H1 (cell line): ENCODE measurements at regions of chr1 and their contacts with region 1.

Region 1: GRCh38 chr1:159798893-159799292 is 3.3 kb upstream of the FCRL6 start:
- DNase-seq: peak in 1 of 2 experiments; percentile 59
- H3K4me3 ChIP-seq: no peak overlapping the region
- H3K27ac ChIP-seq: no peak overlapping the region
- H3K4me1 ChIP-seq: no peaks in the 10 kb centered on the region
- H3K27me3 ChIP-seq: no peaks in the 10 kb centered on the region
- CTCF ChIP-seq: peak; percentile 52 to 96 (median 91)
- EP300 ChIP-seq: no peak
- POLR2A ChIP-seq: no peak
- RAD21 ChIP-seq: peak; percentile 83 to 85

Region 2: DNA sequence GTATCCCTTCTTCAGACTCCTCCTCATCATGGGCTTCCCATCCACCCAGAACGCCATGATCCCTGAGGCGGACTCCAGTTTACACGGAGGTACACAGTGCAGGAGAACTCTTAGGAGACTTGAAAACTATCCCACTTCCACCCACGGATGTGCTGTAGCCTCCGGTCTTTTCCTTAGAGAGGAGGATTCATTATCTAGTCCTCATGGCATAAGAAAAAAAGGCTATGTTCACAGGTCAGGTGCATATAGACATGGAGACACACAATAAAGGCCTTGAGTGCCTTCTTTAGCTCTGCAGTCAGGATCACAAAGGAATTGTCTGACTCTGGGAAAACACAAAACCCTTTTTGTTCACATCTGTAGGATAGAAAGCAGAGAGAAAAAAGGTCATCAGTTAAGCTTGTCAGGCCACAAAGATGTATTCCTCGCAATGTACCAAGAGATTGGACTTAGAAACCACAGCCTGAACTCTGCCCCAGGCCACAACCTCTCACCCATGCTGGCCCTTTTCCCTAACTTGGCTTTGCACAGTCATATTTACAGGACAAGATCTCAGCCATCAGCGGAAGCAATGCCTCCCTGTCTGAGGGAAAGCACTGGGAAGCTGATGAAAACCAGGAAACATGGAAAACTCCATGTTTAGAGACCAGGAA is 93.5 kb before region 1 on chr1:
- CTCF ChIA-PET with region 1: no interaction called
- POLR2A ChIA-PET with region 1: no interaction called
- DNase-seq: no peak
- H3K4me3 ChIP-seq: no peak overlapping the region
- H3K27ac ChIP-seq: no peak overlapping the region
- H3K4me1 ChIP-seq: no peaks in the 10 kb centered on the region
- H3K27me3 ChIP-seq: no peaks in the 10 kb centered on the region; a peak in 1 of 7 replicates
- CTCF ChIP-seq: no peak
- EP300 ChIP-seq: no peak
- POLR2A ChIP-seq: no peak
- RAD21 ChIP-seq: no peak

Region 3: DNA sequence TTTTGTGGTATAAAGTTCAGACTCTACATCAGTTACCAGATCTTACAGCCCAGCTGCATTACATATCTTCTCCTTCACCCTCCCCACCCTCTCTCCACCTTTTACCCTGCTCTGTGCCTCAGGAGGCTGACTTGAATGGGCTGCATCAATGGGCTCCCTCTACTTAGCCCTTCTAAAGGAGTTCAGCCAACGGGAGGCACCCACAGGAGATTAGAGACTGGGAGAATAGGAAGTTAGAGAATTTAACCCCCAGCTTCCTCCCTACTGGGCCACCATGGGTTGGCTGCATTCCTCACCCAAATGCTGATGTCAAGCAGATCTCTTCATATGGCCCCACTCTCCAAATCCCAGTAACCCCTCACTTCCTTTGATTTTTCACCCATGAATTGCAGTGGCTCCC is 35.2 kb before region 1 on chr1:
- CTCF ChIA-PET with region 1: no interaction called
- POLR2A ChIA-PET with region 1: no interaction called
- DNase-seq: no peak
- H3K4me3 ChIP-seq: no peak overlapping the region
- H3K27ac ChIP-seq: no peak overlapping the region
- H3K4me1 ChIP-seq: no peaks in the 10 kb centered on the region
- H3K27me3 ChIP-seq: no peaks in the 10 kb centered on the region
- CTCF ChIP-seq: no peak
- EP300 ChIP-seq: no peak
- POLR2A ChIP-seq: no peak
- RAD21 ChIP-seq: no peak

Region 4: GRCh38 chr1:159780583-159781582 is 18.0 kb before region 1 on chr1 and contains the start of gene DUSP23:
- CTCF ChIA-PET with region 1: interaction called, 32 read pairs
- POLR2A ChIA-PET with region 1: interaction called, 6 read pairs
- DNase-seq: peak; percentile 96
- H3K4me3 ChIP-seq: peak within 1 kb of the TSS; percentile 47 to 80 (median 61)
- H3K27ac ChIP-seq: 0 out of 2 replicates have a peak within 1 kb of the TSS, but pooled peaks have one; percentile 48
- H3K4me1 ChIP-seq: peaks cover 2 to 13% (median 9%) of the 10 kb centered on the region in 4 experiments; a peak in 4 of 7 replicates
- H3K27me3 ChIP-seq: peaks cover 0 to 2% (median 0%) of the 10 kb centered on the region in 4 experiments; a peak in 1 of 7 replicates
- CTCF ChIP-seq: peak; percentile 96 to 98 (median 97)
- EP300 ChIP-seq: no peak
- POLR2A ChIP-seq: peak in 1 of 2 experiments; percentile 47; a peak in 1 of 3 replicates
- RAD21 ChIP-seq: peak; percentile 87
- total RNA-seq, gene DUSP23: 45.8 and 48.3 TPM in 2 replicates

Region 5: DNA sequence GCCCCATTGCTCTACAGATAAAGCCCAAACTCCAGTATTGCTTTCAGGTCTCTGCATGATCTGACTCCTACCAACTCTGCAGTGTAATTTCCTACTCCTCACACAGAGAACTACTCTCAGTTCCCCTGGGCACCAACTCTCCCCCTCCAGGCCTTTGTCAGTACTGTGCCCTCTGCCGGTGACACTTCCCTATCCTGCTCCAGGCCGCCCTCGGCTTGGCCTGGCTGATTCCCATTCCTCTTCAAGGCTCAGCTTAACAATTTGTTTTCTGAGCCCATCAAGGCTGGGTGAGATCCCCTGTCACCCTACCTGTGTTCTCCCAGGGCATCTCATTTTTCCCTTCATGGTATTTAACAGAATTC is 30.4 kb after region 1 on chr1:
- CTCF ChIA-PET with region 1: interaction called, 157 read pairs
- POLR2A ChIA-PET with region 1: interaction called, 3 read pairs
- DNase-seq: peak in 1 of 2 experiments; percentile 67
- H3K4me3 ChIP-seq: no peak overlapping the region
- H3K27ac ChIP-seq: no peak overlapping the region
- H3K4me1 ChIP-seq: peaks cover 0 to 4% (median 2%) of the 10 kb centered on the region in 4 experiments; a peak in 1 of 7 replicates
- H3K27me3 ChIP-seq: peaks cover 0 to 15% (median 3%) of the 10 kb centered on the region in 4 experiments; a peak in 6 of 7 replicates
- CTCF ChIP-seq: peak; percentile 73 to 78 (median 78)
- EP300 ChIP-seq: no peak
- POLR2A ChIP-seq: no peak
- RAD21 ChIP-seq: peak; percentile 43 to 59

Region 6: GRCh38 chr1:159860426-159860825 is 61.5 kb after region 1 on chr1:
- CTCF ChIA-PET with region 1: interaction called, 13 read pairs
- POLR2A ChIA-PET with region 1: no interaction called
- DNase-seq: no peak
- H3K4me3 ChIP-seq: no peak overlapping the region
- H3K27ac ChIP-seq: no peak overlapping the region
- H3K4me1 ChIP-seq: peaks cover 0 to 2% (median 0%) of the 10 kb centered on the region in 4 experiments; a peak in 2 of 7 replicates
- H3K27me3 ChIP-seq: peaks cover 0 to 11% (median 8%) of the 10 kb centered on the region in 4 experiments; a peak in 6 of 7 replicates
- CTCF ChIP-seq: no peak
- EP300 ChIP-seq: no peak
- POLR2A ChIP-seq: no peak
- RAD21 ChIP-seq: no peak

Region 7: DNA sequence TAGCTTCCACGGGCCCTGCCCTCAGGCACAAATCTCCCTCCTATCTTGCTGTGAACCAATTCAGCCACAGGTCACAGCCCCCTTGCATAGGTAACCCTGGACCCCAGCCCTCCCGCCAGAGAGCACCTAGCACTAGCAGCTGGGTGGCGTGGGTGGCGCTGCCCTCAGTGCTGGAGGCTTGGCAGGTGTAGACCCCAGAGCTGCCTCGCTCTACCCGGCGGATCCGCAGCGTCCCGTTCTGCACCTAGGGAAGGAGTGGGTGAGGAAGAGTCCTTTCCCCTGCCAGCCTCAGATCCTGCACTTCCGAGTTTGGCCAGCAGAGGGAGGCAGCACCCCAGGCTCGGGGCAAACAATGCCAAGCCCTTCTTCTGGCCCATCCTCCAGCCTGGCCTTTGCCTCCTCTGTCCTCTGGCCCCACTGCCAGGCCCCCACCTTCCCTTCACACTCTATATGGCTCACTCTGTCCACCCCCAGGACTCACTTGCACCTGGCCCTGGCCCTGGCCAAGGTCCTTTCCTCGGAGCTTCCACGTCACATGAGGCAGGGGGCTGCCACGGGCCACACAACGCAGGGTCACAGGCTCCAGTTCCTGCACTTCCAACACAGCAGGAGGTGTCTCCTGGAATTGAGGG is 137.5 kb after region 1 on chr1:
- CTCF ChIA-PET with region 1: interaction called, 21 read pairs
- POLR2A ChIA-PET with region 1: no interaction called
- DNase-seq: peak in 1 of 2 experiments; percentile 100
- H3K4me3 ChIP-seq: no peak overlapping the region
- H3K27ac ChIP-seq: no peak overlapping the region
- H3K4me1 ChIP-seq: peaks cover 0 to 12% (median 7%) of the 10 kb centered on the region in 4 experiments; a peak in 6 of 7 replicates
- H3K27me3 ChIP-seq: no peaks in the 10 kb centered on the region
- CTCF ChIP-seq: peak; percentile 97 to 99 (median 99)
- EP300 ChIP-seq: no peak
- POLR2A ChIP-seq: no peak
- RAD21 ChIP-seq: peak; percentile 98 to 99

Region 8: GRCh38 chr1:160058087-160058486 is 259.2 kb after region 1 on chr1:
- CTCF ChIA-PET with region 1: no interaction called
- POLR2A ChIA-PET with region 1: no interaction called
- DNase-seq: no peak
- H3K4me3 ChIP-seq: no peak overlapping the region
- H3K27ac ChIP-seq: no peak overlapping the region
- H3K4me1 ChIP-seq: peaks cover 0 to 17% (median 12%) of the 10 kb centered on the region in 4 experiments; a peak in 6 of 7 replicates
- H3K27me3 ChIP-seq: peaks cover 0 to 4% (median 1%) of the 10 kb centered on the region in 4 experiments; a peak in 3 of 7 replicates
- CTCF ChIP-seq: peak; percentile 40 to 60 (median 52)
- EP300 ChIP-seq: no peak
- POLR2A ChIP-seq: no peak
- RAD21 ChIP-seq: peak; percentile 45 to 61